Mammary epithelial cell (primary cell): ENCODE measurements at regions of chr4 and their contacts with region 1.

Region 1: DNA sequence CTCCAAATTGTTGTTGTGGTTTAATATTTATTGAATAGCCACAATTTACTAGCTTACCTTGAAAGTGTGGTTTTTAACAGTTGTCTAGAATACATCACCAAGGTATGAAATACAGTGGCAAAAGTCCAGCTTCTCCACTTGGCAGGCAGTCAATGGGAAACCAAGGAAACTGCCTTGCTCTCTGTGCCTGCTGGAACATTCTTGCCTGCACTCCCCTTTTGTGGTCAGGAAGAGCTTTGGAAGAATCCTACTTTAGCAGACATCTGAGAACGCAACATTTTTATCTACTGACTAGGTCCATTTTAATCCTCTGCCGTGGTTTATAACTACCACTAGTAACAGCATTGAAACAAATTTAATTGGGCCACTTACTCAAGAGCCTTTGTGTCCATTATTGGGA is 64.5 kb downstream of the TENM3 start:
- DNase-seq: peak; percentile 98
- H3K4me3 ChIP-seq: peak overlapping the region in 1 of 3 experiments; percentile 3
- H3K27ac ChIP-seq: peak overlapping the region; percentile 92
- H3K4me1 ChIP-seq: peaks cover 24% of the 10 kb centered on the region
- H3K27me3 ChIP-seq: no peaks in the 10 kb centered on the region
- CTCF ChIP-seq: no peak

Region 2: DNA sequence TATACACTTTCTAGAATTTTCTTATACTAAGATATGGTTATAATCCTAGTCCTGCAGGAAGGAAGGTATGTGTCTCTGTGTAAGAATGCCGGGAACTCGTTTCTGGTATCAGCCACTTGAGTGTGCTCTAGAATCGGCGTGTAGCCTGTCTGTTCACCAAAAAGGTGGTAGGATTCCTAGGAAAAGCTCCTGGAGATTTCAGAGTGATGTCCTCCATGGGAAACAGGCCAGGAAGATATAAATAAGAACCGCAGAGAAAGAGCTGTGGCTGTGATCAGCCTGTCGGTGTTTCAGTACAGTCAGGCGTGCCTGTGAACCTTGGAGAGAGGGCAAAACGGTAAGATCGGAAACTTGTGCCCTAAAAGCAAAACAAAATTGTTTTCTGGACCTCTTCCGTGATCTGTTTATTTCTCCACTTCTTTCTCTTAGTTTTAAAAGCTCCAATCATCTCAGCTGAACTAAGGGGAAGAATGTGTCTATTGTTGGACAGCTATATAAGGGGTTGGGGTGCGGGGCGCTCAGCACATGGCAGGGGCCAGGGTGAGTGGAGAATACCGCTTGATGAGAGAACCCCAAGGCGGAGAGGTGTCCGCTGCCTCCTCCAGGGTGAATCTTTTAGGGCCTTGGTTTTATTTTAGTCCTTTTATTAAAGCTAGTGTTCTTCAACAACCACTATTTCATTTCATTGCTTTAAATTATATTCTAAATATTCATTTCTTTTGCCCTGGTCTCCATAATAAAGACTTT is 368.4 kb before region 1 on chr4:
- CTCF ChIA-PET with region 1: no interaction called
- dilution Hi-C with region 1: no loop called
- in situ Hi-C with region 1: no loop called
- intact Hi-C with region 1: loop called (anchors 1 kb)
- DNase-seq: peak; percentile 59
- H3K4me3 ChIP-seq: peak overlapping the region in 1 of 3 experiments; percentile 26
- H3K27ac ChIP-seq: peak overlapping the region; percentile 25
- H3K4me1 ChIP-seq: peaks cover 4% of the 10 kb centered on the region
- H3K27me3 ChIP-seq: no peaks in the 10 kb centered on the region
- CTCF ChIP-seq: peak; percentile 46 to 63

Region 3: GRCh38 chr4:182126096-182126495 is 181.7 kb before region 1 on chr4:
- CTCF ChIA-PET with region 1: no interaction called
- dilution Hi-C with region 1: no loop called
- in situ Hi-C with region 1: no loop called
- intact Hi-C with region 1: loop called (anchors 5 kb)
- DNase-seq: peak; percentile 95
- H3K4me3 ChIP-seq: peak overlapping the region; percentile 0 to 34 (median 30)
- H3K27ac ChIP-seq: peak overlapping the region; percentile 100
- H3K4me1 ChIP-seq: peaks cover 35% of the 10 kb centered on the region
- H3K27me3 ChIP-seq: no peaks in the 10 kb centered on the region
- CTCF ChIP-seq: no peak

Region 4: GRCh38 chr4:182207830-182208396 is 99.8 kb before region 1 on chr4:
- CTCF ChIA-PET with region 1: no interaction called
- dilution Hi-C with region 1: no loop called
- in situ Hi-C with region 1: no loop called
- intact Hi-C with region 1: loop called (anchors 5 kb)
- DNase-seq: peak; percentile 86
- H3K4me3 ChIP-seq: peak overlapping the region in 1 of 3 experiments; percentile 21
- H3K27ac ChIP-seq: peak overlapping the region; percentile 93
- H3K4me1 ChIP-seq: peaks cover 27% of the 10 kb centered on the region
- H3K27me3 ChIP-seq: no peaks in the 10 kb centered on the region
- CTCF ChIP-seq: no peak

Region 5: DNA sequence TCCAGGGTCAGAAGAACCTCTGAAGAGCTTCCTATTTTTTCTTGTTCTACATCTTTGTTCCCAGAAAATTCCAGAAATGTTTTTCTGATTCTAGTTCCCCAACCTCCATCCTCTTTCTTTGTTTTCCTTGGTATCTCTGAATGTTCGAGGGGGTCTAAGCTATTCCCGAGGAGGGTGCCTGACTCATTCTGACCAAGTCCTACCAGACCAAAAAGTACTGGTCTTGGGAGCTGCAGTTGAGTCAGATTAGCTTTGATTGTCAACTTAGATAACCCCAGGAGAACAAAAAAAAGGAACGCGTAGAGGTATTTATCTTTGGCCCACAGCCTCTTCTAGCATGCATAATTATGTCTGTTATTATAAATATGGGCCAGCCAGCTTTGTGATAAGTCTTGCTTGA is 76.7 kb before region 1 on chr4:
- CTCF ChIA-PET with region 1: no interaction called
- dilution Hi-C with region 1: no loop called
- in situ Hi-C with region 1: no loop called
- intact Hi-C with region 1: no loop called
- DNase-seq: no peak
- H3K4me3 ChIP-seq: no peak overlapping the region
- H3K27ac ChIP-seq: no peak overlapping the region
- H3K4me1 ChIP-seq: peaks cover 13% of the 10 kb centered on the region
- H3K27me3 ChIP-seq: no peaks in the 10 kb centered on the region
- CTCF ChIP-seq: no peak

Region 6: DNA sequence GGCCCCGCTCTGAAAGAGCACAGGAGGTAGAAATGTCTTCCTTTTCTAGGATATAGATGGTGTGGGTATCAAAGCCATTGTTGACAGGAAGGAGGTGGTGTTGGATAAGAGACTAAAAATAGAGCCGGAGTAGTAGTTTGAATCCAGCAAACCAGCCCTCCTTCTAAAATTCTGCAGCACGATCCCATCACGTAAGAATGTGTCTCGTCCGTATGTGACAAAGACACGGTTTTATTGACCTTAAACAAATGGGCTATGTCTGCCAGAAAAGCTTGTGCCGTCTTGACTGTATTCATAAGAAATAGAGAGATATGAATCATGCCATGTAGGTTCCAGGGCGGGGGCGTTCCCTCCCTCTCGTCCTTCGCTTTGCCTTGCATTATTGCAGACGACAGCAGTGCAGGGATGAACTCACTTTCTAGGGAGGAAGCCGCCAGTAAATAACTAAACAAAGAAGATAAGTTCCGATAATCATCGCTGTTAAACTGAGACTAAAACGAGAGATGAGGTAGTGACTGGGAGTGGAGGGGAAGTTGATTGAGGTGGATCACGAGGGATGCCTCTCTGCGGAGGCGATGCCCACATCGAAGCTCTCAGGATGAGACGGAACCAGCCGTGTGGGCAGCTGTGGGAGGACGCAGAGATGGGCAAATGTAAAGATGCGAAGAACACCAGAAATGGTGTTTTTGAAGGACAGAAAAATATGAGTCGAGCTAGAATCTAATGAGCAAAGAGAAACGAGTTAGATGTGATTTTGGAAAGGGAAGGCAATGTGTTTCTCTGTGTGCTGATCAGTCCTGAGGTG is 61.1 kb before region 1 on chr4:
- CTCF ChIA-PET with region 1: interaction called, 3 read pairs
- dilution Hi-C with region 1: no loop called
- in situ Hi-C with region 1: no loop called
- intact Hi-C with region 1: loop called (anchors 1 kb)
- DNase-seq: peak; percentile 86
- H3K4me3 ChIP-seq: peak overlapping the region; percentile 37 to 42 (median 38)
- H3K27ac ChIP-seq: peak overlapping the region; percentile 75
- H3K4me1 ChIP-seq: peaks cover 47% of the 10 kb centered on the region
- H3K27me3 ChIP-seq: no peaks in the 10 kb centered on the region
- CTCF ChIP-seq: no peak

Region 7: GRCh38 chr4:182385897-182386296 is 78.2 kb after region 1 on chr4:
- CTCF ChIA-PET with region 1: no interaction called
- dilution Hi-C with region 1: no loop called
- in situ Hi-C with region 1: no loop called
- intact Hi-C with region 1: no loop called
- DNase-seq: no peak
- H3K4me3 ChIP-seq: no peak overlapping the region
- H3K27ac ChIP-seq: no peak overlapping the region
- H3K4me1 ChIP-seq: no peaks in the 10 kb centered on the region
- H3K27me3 ChIP-seq: no peaks in the 10 kb centered on the region
- CTCF ChIP-seq: no peak

Region 8: DNA sequence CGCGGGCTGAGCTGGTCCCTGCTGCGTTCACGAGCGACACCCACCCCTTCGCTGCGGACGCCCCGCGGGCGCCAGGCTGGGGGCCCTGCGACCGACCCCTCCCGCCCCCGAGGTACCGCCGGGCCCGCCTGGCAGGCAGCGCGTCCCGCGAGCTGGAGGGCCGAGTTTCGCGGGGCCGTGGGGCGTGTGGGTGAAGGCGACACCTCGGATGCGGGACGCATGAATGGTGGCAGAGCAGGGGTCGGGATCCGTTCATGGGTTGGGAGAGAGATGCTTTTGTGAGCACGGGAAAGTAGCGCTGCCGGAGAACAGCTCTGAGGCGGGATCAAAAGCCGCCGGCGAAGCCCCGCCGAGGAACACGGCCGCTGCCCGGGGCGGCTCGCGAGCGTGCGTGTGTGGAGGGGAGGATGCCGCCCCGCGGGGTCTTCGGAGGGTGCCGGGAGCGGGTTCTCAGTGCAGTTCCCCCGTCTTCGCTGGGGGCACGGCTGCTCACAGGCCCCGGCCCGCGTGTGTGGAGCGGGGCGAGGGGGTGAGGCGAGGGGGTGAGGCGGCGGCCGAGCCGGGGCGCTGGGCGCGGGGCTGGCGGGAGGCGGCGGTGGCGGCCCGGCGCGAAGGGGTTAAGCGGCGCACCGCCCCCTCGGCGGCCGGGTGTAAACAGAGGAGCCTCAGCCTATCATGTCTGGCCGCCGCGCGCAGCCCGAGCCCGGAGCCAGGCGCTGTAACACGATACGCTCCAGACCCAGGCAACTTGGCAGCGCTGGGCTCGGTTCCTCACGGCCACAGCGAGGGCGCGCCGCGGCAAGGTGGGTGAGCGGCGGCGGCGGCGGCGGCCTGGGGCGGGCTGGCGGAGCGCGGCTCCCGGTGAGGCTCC is 140.8 kb after region 1 on chr4:
- CTCF ChIA-PET with region 1: no interaction called
- dilution Hi-C with region 1: no loop called
- in situ Hi-C with region 1: no loop called
- intact Hi-C with region 1: loop called (anchors 2 kb)
- DNase-seq: peak; percentile 89
- H3K4me3 ChIP-seq: peak overlapping the region; percentile 63 to 96 (median 88)
- H3K27ac ChIP-seq: peak overlapping the region; percentile 64
- H3K4me1 ChIP-seq: peaks cover 17% of the 10 kb centered on the region
- H3K27me3 ChIP-seq: no peaks in the 10 kb centered on the region
- CTCF ChIP-seq: no peak

Region 9: GRCh38 chr4:182823576-182823975 is 515.8 kb after region 1 on chr4:
- CTCF ChIA-PET with region 1: no interaction called
- dilution Hi-C with region 1: no loop called
- in situ Hi-C with region 1: no loop called
- intact Hi-C with region 1: no loop called
- DNase-seq: no peak
- H3K4me3 ChIP-seq: no peak overlapping the region
- H3K27ac ChIP-seq: no peak overlapping the region
- H3K4me1 ChIP-seq: peaks cover 5% of the 10 kb centered on the region
- H3K27me3 ChIP-seq: no peaks in the 10 kb centered on the region
- CTCF ChIP-seq: no peak